Adrenal gland (tissue), 19 donors: ENCODE measurements at regions of chr20 and their contacts with region 1.

Region 1: GRCh38 chr20:59094576-59094975 is 52.0 kb upstream of the PRELID3B start:
- DNase-seq: no peak
- H3K4me3 ChIP-seq: no peak overlapping the region
- H3K27ac ChIP-seq: no peak overlapping the region
- H3K4me1 ChIP-seq: no peaks in the 10 kb centered on the region
- H3K27me3 ChIP-seq: no peaks in the 10 kb centered on the region
- CTCF ChIP-seq: no peak
- POLR2A ChIP-seq: no peak

Region 2: DNA sequence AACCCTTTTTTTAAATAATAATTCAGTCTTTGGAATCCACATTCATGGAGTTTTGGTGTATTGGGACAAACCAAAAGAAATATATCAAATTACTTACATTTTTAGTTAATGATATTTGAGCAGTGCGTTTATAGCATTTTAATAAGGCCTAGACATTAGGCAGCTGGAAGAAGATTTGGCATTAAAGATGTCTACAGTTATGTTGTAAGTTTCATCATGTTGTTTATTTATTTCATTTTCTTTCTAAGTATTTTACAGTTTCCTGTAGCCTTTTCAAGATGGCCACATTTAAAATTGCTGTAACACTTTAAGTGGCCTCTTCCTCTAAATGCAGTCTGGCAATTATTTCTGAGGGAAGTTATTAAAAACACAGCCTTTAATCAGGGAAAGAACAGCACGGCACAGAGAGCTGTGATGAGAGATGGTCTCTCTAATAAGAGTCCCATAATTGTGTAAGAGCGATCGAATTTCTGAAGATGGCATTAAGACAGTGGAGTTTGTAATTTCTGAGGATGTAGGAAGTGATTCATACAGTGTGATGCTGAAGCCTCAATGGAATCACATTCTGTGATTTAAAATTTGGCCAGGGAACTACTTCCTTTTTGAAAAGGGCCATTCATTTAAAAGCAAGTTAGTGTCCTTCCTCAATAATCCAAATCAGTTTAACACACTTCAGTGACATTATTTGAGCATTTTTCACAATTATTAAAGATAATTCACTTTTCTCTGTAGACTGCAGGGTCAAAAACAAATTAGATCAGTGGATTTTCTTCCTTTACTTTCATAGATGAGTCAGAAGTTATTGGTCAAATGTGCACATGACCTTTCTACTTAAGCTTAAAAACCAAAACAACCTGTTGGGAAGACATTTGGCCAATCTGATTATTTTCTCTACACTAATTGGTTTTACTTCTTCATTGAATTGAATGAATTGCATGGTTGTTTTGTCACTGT is 153.4 kb after region 1 on chr20:
- intact Hi-C with region 1: no loop called
- DNase-seq: no peak
- H3K4me3 ChIP-seq: no peak overlapping the region
- H3K27ac ChIP-seq: no peak overlapping the region
- H3K4me1 ChIP-seq: no peaks in the 10 kb centered on the region
- H3K27me3 ChIP-seq: peaks cover 12% of the 10 kb centered on the region
- CTCF ChIP-seq: no peak
- POLR2A ChIP-seq: no peak

Region 3: GRCh38 chr20:59403261-59403961 is 308.8 kb after region 1 on chr20:
- intact Hi-C with region 1: loop called in 1 of 2 experiments (anchors 5 kb)
- DNase-seq: peak; percentile 18 to 73 (median 51)
- H3K4me3 ChIP-seq: no peak overlapping the region
- H3K27ac ChIP-seq: peak overlapping the region in 1 of 5 donors; percentile 52
- H3K4me1 ChIP-seq: peaks cover 0 to 11% of the 10 kb centered on the region in 2 donors
- H3K27me3 ChIP-seq: peaks cover 24% of the 10 kb centered on the region
- CTCF ChIP-seq: peak; percentile 70 to 96 (median 80)
- POLR2A ChIP-seq: no peak